HEK293 (cell line): ENCODE measurements at regions of chr9 and their contacts with region 1.

Region 1: GRCh38 chr9:2857564-2858198 is 13.8 kb upstream of the PUM3 start:
- H3K4me3 ChIP-seq: no peak overlapping the region
- H3K27ac ChIP-seq: no peak overlapping the region
- H3K4me1 ChIP-seq: no peaks in the 10 kb centered on the region
- CTCF ChIP-seq: peak; percentile 42; the same call in 1 of the 2 replicates

Region 2: GRCh38 chr9:2809691-2810433 is 47.8 kb before region 1 on chr9:
- CTCF ChIA-PET with region 1: no interaction called
- POLR2A ChIA-PET with region 1: no interaction called
- H3K4me3 ChIP-seq: no peak overlapping the region
- H3K27ac ChIP-seq: no peak overlapping the region
- H3K4me1 ChIP-seq: no peaks in the 10 kb centered on the region
- CTCF ChIP-seq: no peak

Region 3: GRCh38 chr9:2846115-2846514 is 11.6 kb before region 1 on chr9:
- CTCF ChIA-PET with region 1: interaction called, 12 read pairs
- POLR2A ChIA-PET with region 1: interaction called, 4 read pairs
- H3K4me3 ChIP-seq: no peak overlapping the region
- H3K27ac ChIP-seq: no peak overlapping the region
- H3K4me1 ChIP-seq: peaks cover 4% of the 10 kb centered on the region; the same call in 1 of the 2 replicates
- CTCF ChIP-seq: no peak

Region 4: GRCh38 chr9:2872257-2872935 is 14.7 kb after region 1 on chr9:
- CTCF ChIA-PET with region 1: interaction called, 35 read pairs
- POLR2A ChIA-PET with region 1: no interaction called
- H3K4me3 ChIP-seq: no peak overlapping the region
- H3K27ac ChIP-seq: no peak overlapping the region
- H3K4me1 ChIP-seq: no peaks in the 10 kb centered on the region
- CTCF ChIP-seq: 0 out of 2 replicates have a peak, but pooled peaks have one; percentile 15

Region 5: DNA sequence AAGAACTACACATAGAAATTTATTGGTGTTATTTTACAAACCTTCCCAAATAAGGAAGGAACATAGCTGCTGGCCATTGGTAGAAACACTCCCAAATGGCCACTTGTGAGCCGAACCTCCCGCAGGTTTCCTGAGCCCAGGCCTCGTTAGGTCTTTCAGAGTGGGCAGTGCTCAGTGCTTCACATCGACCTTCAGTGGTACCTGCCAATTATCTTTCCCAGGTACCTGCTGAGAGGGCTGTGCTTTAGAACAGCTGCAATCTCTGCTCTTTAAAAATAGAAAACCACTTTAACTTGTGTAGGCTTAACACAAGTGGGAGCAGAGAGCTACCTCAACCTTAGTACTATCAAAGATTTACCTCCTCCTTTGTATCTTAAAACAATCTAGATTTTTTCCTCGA is 334.0 kb after region 1 on chr9:
- CTCF ChIA-PET with region 1: interaction called, 21 read pairs
- POLR2A ChIA-PET with region 1: no interaction called
- H3K4me3 ChIP-seq: no peak overlapping the region
- H3K27ac ChIP-seq: no peak overlapping the region
- H3K4me1 ChIP-seq: no peaks in the 10 kb centered on the region
- CTCF ChIP-seq: no peak